ENCODE measurements at regions of chr9 and their contacts with region 1.

Region 1: GRCh38 chr9:25481372-25482104 is 196.7 kb downstream of the TUSC1 start:
- H3K4me3 Mint-ChIP-seq: no peak overlapping the region
- H3K27ac Mint-ChIP-seq: no peak overlapping the region
- H3K4me1 Mint-ChIP-seq: no peaks in the 10 kb centered on the region
- H3K27me3 Mint-ChIP-seq: no peaks in the 10 kb centered on the region

Region 2: GRCh38 chr9:25284365-25284764 is 197.2 kb before region 1 on chr9:
- intact Hi-C with region 1: loop called (anchors 10 kb)
- H3K4me3 Mint-ChIP-seq: no peak overlapping the region
- H3K27ac Mint-ChIP-seq: no peak overlapping the region
- H3K4me1 Mint-ChIP-seq: no peaks in the 10 kb centered on the region
- H3K27me3 Mint-ChIP-seq: no peaks in the 10 kb centered on the region

Region 3: DNA sequence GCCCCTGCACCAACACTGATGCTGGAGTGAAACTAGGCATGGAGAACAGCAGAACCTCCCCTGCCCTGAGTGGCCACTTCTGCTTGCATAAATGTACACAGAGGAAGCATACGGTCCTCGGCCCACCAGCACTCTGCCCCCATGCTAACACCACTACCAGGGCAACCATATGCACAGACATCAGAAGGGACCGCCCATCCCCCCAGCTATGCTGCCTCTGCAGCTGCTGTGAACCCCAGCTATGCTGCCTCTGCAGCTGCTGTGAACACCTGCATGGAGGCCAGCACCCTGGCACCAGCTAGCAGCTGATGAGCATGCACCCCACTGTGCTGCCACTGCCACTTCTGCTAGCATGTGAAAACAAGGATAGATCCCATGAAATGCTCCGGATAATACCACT is 53.6 kb before region 1 on chr9:
- intact Hi-C with region 1: loop called (anchors 10 kb)
- H3K4me3 Mint-ChIP-seq: no peak overlapping the region
- H3K27ac Mint-ChIP-seq: no peak overlapping the region
- H3K4me1 Mint-ChIP-seq: no peaks in the 10 kb centered on the region
- H3K27me3 Mint-ChIP-seq: no peaks in the 10 kb centered on the region

Region 4: GRCh38 chr9:25463551-25463950 is 18.0 kb before region 1 on chr9:
- intact Hi-C with region 1: no loop called
- H3K4me3 Mint-ChIP-seq: no peak overlapping the region
- H3K27ac Mint-ChIP-seq: no peak overlapping the region
- H3K4me1 Mint-ChIP-seq: no peaks in the 10 kb centered on the region
- H3K27me3 Mint-ChIP-seq: no peaks in the 10 kb centered on the region

Region 5: DNA sequence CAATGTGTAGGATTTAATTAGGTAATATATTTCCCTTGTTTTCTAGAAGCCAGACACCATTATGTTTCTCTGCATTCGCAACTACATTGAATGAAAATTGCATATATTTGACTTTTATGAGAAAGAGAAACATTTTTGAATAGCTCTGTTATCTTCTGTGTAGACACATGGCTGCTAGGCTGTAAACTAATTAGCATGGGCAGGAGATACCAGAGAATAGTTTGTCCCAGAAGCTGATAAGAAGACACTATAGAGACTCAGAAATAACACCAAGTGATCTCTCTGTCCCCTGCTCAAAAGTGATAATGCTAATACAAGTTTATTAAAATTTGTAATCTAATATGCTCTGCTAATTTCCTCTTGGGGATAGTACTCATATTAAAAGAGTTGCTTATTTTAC is 394.7 kb after region 1 on chr9:
- intact Hi-C with region 1: no loop called
- H3K4me3 Mint-ChIP-seq: no peak overlapping the region
- H3K27ac Mint-ChIP-seq: no peak overlapping the region
- H3K4me1 Mint-ChIP-seq: no peaks in the 10 kb centered on the region
- H3K27me3 Mint-ChIP-seq: no peaks in the 10 kb centered on the region